ENCODE measurements at regions of chr1 and their contacts with region 1.

Region 1: GRCh38 chr1:3491291-3492246 is 37.1 kb downstream of the ARHGEF16 start:
- DNase-seq: peak; percentile 95
- H3K4me3 ChIP-seq: peak overlapping the region; percentile 27 to 32; a peak in 3 of 4 replicates
- H3K27ac ChIP-seq: no peak overlapping the region
- H3K4me1 ChIP-seq: peaks cover 4% of the 10 kb centered on the region in 2 experiments; a peak in 1 of 4 replicates
- H3K27me3 ChIP-seq: no peaks in the 10 kb centered on the region
- CTCF ChIP-seq: peak; percentile 82
- EP300 ChIP-seq: no peak
- RAD21 ChIP-seq: peak; percentile 87

Region 2: GRCh38 chr1:3471302-3472087 is 20.1 kb before region 1 on chr1:
- CTCF ChIA-PET with region 1: interaction called, 10 read pairs
- POLR2A ChIA-PET with region 1: no interaction called
- DNase-seq: peak; percentile 73
- H3K4me3 ChIP-seq: no peak overlapping the region
- H3K27ac ChIP-seq: no peak overlapping the region
- H3K4me1 ChIP-seq: peaks cover 0 to 7% of the 10 kb centered on the region in 2 experiments; a peak in 2 of 4 replicates
- H3K27me3 ChIP-seq: no peaks in the 10 kb centered on the region
- CTCF ChIP-seq: peak; percentile 28
- EP300 ChIP-seq: no peak
- RAD21 ChIP-seq: peak; percentile 45

Region 3: GRCh38 chr1:3501856-3502665 is 10.5 kb after region 1 on chr1:
- CTCF ChIA-PET with region 1: interaction called, 10 read pairs
- POLR2A ChIA-PET with region 1: no interaction called
- DNase-seq: peak; percentile 75
- H3K4me3 ChIP-seq: no peak overlapping the region
- H3K27ac ChIP-seq: peak overlapping the region in 1 of 2 experiments; percentile 68; a peak in 1 of 4 replicates
- H3K4me1 ChIP-seq: peaks cover 5 to 35% of the 10 kb centered on the region in 2 experiments; a peak in 2 of 4 replicates
- H3K27me3 ChIP-seq: no peaks in the 10 kb centered on the region
- CTCF ChIP-seq: no peak
- EP300 ChIP-seq: no peak
- RAD21 ChIP-seq: no peak

Region 4: DNA sequence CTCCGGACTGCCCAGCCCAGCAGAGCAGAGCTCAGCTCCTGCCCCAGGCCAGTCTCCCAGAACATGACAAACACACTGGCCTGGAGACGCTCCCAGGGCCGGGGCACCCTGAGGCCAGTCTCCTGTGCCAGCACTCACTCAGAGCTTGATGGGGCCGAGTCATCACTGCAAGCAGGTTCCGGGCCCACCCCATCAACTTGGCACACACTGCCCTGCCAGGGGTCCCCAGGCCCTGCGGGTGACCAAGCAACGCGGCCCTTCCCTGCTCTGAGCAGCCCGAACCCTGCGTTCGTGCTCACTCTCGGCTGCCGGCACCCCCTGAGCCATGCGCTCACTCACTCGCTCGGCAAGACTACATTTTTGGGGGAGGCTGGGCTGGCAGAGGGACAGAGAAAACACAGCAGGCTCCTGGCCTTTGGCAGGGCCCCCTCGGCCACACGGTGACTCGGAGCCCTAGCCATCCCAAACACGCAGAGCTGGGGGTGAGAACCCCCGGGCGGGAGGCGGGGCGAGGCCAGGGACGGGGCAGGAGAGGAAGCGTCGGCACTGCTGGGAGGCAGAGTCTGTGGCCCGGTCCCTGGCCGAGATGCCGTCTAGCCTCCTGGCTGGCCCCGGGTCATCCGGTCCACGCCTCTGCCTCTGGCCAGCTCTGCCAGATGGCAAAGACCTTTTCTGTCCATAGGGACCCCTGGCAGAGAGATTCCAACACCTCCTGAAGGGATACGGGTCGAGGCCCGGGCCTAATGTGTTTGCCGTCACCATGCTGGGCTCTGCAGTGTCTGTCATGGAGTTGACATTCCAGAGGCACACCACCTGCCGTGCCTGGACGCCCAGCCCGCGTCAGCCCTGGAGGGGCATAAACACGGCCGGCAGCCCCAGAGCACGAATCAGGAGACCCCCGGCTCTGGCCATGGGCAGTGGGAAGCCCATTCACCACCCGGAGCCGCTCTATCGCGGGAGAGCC is 51.8 kb after region 1 on chr1:
- CTCF ChIA-PET with region 1: interaction called, 14 read pairs
- POLR2A ChIA-PET with region 1: no interaction called
- DNase-seq: peak; percentile 61
- H3K4me3 ChIP-seq: no peak overlapping the region
- H3K27ac ChIP-seq: peak overlapping the region; percentile 50 to 75; a peak in 3 of 4 replicates
- H3K4me1 ChIP-seq: peaks cover 0 to 73% of the 10 kb centered on the region in 2 experiments; a peak in 1 of 4 replicates
- H3K27me3 ChIP-seq: no peaks in the 10 kb centered on the region
- CTCF ChIP-seq: no peak
- EP300 ChIP-seq: no peak
- RAD21 ChIP-seq: no peak

Region 5: DNA sequence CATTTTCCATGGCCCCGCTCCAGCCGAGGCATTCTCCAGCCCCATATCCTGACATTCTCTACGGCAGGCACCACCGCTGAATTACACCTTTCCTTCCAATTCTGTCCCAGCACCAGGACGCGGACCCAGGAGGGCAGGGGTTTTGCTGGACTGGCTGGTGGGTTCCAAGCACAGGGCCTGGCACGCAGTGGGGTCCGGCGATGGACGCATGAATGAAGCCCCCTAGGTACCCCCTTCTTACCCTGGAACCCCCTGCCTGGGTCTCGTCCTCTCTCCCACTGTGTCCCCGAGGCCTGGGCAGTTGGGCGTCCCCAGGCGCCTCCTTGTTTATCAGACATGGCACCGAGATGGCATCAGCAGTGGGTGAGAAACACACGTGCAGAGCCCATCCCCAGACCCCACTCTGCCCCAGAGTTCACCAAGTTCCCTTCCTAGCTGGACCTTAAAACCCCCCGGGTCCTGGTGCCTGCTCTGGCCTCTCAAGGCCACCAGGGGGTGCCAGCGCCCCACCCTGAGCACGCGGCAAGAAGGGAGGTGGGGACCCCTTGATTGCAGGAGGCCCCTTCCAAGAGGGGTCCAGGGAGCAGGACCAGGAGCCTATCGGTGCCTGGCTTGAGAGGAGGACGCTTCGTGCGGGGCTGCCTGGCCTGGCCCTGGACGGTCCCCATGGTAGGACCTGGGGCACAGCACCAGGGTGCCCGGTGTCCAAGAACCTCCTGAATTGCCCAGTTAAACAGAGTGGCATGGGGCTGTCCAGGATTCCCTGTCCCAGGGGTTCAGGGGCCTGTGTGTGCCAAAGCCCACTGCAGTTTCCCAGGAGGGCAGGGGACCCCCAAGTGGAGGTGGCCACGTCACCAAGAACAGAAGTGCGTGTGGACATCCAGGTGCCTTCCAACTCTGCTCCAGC is 73.6 kb after region 1 on chr1:
- CTCF ChIA-PET with region 1: interaction called, 18 read pairs
- POLR2A ChIA-PET with region 1: no interaction called
- DNase-seq: peak; percentile 93
- H3K4me3 ChIP-seq: peak overlapping the region in 1 of 2 experiments; percentile 52; a peak in 1 of 4 replicates
- H3K27ac ChIP-seq: no peak overlapping the region; a peak in 1 of 4 replicates
- H3K4me1 ChIP-seq: peaks cover 0 to 45% of the 10 kb centered on the region in 2 experiments; a peak in 1 of 4 replicates
- H3K27me3 ChIP-seq: no peaks in the 10 kb centered on the region
- CTCF ChIP-seq: peak; percentile 71
- EP300 ChIP-seq: no peak
- RAD21 ChIP-seq: peak; percentile 88

Region 6: DNA sequence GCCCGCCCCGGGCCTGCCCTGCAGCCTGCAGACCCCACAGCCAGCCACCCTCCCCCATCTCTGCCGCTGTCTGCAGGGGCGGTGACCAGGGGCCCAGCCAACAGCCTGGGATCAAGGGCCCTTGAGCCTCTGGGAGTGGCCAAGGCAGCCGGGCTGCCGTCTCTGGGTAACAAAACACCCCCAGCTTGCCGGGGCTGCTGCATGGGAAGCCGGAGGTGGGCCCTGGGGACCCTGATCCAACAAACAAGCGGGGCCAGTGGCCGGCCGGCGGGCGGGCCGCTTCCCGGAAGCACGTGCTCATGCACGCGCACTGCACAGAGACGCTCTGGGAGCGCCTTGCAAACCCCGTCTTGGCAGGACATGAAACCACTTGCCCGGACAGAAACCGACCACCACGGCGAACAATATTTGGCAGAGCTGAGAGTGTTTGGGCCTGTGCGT is 106.5 kb after region 1 on chr1:
- CTCF ChIA-PET with region 1: interaction called, 11 read pairs
- POLR2A ChIA-PET with region 1: no interaction called
- DNase-seq: no peak
- H3K4me3 ChIP-seq: no peak overlapping the region
- H3K27ac ChIP-seq: no peak overlapping the region; a peak in 1 of 4 replicates
- H3K4me1 ChIP-seq: peaks cover 0 to 23% of the 10 kb centered on the region in 2 experiments; a peak in 1 of 4 replicates
- H3K27me3 ChIP-seq: no peaks in the 10 kb centered on the region
- CTCF ChIP-seq: no peak
- EP300 ChIP-seq: no peak
- RAD21 ChIP-seq: no peak

Region 7: DNA sequence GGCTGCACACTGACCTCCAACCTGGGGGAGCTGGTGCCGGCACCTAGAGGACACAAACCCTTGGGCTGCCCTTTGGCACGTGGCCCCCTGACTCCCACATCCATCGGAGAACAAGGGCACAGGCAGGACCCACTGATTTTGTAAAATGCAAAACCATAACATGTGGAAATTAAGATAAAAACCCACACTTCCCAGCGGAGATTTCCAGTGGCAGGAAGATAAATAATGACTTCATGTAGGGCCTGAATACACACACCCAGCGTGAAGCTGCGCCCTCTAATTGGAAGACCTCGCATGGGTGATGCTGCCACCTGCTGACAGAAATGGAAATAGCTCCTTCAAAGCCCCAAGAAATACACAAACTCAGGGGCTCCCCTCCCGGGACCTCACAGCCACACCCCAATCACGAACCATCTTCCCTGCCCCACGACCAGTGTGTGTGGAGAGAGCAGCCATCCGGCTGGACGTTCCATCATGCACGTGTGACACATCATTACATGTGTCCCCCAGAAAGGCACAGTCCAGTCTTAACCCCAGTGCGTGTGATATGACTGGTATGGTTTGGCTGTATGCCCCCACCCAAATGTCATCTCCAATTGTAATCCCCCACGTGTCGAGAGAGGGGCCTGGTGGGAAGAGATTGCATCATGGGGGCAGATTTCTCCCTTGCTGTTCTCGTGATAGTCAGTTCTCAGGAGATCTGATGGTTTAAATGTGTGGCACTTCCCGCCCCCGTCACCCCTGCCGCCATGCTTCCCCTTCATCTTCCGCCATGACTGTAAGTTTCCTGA is 127.5 kb after region 1 on chr1:
- CTCF ChIA-PET with region 1: interaction called, 26 read pairs
- POLR2A ChIA-PET with region 1: no interaction called
- DNase-seq: peak; percentile 84
- H3K4me3 ChIP-seq: peak overlapping the region in 1 of 2 experiments; percentile 45; a peak in 1 of 4 replicates
- H3K27ac ChIP-seq: no peak overlapping the region
- H3K4me1 ChIP-seq: peaks cover 0 to 19% of the 10 kb centered on the region in 2 experiments; a peak in 1 of 4 replicates
- H3K27me3 ChIP-seq: no peaks in the 10 kb centered on the region
- CTCF ChIP-seq: peak; percentile 78
- EP300 ChIP-seq: no peak
- RAD21 ChIP-seq: peak; percentile 84